Psoas muscle (tissue), 8 donors: ENCODE measurements at regions of chr3 and their contacts with region 1.

Region 1: GRCh38 chr3:101573449-101574387 is at the start of gene PCNP:
- DNase-seq: peak; percentile 98 to 99
- ATAC-seq: peak; percentile 91 to 97 (median 94)
- H3K4me3 ChIP-seq: peak within 1 kb of the TSS; percentile 78
- H3K27ac ChIP-seq: peak within 1 kb of the TSS; percentile 100
- H3K4me1 ChIP-seq: peaks cover 26% of the 10 kb centered on the region
- H3K27me3 ChIP-seq: no peaks in the 10 kb centered on the region
- CTCF ChIP-seq: peak; percentile 89
- total RNA-seq, gene PCNP: 80.6 to 133 (median 112) TPM

Region 2: DNA sequence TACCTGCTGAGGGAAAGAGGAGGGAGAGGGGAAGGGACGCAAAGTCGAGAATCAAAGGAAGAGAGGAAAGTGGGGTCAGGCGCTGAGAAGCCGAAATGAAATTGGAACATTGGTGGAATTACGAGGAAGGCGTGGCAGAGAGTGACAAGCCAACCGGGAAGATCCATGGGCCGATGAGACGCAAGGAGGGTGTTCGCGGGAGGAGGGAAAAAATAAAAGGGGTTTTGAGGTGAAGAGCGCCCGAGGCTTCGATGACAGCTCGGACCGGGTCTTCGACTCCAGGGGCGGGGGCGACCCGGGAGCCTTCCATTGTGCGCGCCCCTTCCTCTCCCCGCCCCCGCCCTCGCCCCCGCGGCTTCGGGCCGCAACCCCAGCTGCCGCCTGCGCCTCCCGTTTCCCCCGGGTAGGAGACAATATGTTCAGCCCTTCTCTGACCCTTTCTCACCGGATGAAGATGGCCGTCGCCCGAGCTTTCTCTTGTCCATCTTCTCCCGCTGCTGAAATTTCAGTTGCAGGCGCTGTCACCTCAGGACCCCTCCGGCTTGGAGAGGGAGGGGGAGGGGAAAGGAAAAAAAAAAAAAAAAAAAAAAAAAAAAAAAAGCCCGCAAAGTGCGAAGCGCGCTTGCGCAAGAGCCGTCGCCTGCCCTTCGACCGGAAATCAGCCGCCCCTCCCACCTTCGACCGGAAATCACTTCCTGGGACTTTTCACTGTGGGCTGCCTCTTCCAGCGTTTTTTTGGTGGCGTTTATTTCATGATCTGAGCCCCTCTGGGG is 60.9 kb before region 1 on chr3 and contains the start of gene SENP7:
- intact Hi-C with region 1: loop called in 1 of 2 experiments (anchors 2 kb)
- DNase-seq: peak; percentile 86 to 92
- ATAC-seq: peak; percentile 83 to 93 (median 85)
- H3K4me3 ChIP-seq: peak within 1 kb of the TSS; percentile 86
- H3K27ac ChIP-seq: peak within 1 kb of the TSS; percentile 90
- H3K4me1 ChIP-seq: peaks cover 3% of the 10 kb centered on the region
- H3K27me3 ChIP-seq: peaks cover 0 to 10% (median 0%) of the 10 kb centered on the region in 3 donors
- CTCF ChIP-seq: no peak
- total RNA-seq, gene SENP7: 7.7 to 8.7 (median 8.2) TPM

Region 3: DNA sequence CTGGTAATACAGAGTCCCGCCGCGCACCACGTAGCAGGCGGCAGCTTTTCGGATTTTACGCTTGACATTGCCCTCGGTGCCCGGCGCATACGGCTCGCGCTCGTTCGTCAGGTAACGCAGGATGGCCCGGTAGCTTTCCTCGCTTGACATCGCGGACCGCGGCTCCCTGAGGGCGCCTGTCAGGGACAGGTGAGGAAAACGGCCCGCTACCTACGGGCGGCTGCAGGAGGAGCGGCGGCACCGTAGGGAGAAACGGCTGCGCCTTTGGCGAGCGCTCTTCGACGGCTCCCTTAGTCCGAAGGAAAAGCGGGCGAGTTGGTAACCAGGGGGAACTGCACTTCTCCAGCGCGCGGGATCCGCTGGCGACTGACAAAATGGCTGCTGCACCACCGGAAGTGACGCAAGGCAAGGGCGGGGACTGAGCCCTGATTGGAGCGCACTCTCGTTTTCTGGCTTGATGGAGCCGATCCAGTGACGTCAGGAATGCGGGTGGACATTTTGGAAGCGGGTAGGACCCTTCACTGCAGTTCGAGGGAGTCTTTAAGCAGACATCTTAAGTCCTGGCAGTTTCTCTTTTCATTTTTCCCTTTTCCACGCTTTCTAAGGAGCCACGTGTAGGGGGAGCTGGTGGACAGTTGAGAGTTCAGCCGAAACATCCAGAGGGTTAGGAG is 103.2 kb after region 1 on chr3 and contains the start of gene ZBTB11:
- intact Hi-C with region 1: loop called in 1 of 2 experiments (anchors 5 kb)
- DNase-seq: peak; percentile 100
- ATAC-seq: peak; percentile 88 to 89 (median 89)
- H3K4me3 ChIP-seq: peak within 1 kb of the TSS; percentile 84
- H3K27ac ChIP-seq: peak within 1 kb of the TSS; percentile 97
- H3K4me1 ChIP-seq: peaks cover 20% of the 10 kb centered on the region
- H3K27me3 ChIP-seq: no peaks in the 10 kb centered on the region
- CTCF ChIP-seq: peak; percentile 30
- total RNA-seq, gene ZBTB11: 10.3 to 12.6 (median 11.6) TPM